ENCODE measurements at regions of chrX and their contacts with region 1.

Region 1: DNA sequence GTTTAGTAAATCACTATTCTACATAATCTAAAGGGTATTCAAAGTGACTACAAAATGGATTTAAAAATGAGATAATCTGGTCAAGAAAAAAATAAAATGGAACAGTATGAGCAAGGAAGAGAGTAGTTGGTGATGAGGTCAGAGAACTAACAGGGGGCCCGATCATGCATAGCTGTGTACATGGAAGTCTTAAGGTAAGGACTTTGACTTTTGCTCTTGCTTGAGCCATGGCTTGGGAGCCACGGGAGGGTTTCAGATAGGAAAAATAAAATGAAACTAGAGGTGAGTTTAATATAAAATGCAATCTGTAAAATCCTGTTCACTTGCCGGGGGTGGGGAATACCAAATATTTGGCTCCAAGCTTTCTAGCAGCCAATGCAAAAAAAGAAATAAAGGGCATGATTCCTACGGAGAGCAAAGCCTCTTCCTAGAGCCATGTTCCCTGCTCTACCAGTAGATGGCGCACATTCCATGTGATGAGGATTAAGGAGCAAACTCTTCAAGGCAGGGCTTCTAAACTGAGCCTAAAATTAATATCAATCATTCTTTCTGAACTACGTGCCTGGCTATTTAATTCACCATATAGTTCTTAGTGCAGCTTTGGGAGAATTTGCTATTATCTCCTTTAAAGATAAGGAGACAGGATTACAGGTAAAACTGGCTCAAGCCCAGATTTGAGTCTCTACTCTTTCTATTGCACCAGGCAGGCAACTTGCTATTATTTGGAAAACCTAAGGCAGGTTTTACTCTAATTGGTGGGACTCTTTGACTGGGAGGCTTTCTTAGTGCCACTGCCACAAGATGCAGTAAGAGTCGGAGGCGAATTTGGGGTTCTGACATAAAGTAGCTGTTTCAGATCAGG is 6.8 kb upstream of the CLCN5 start:
- DNase-seq: no peak
- H3K4me3 ChIP-seq: no peak overlapping the region
- H3K27ac ChIP-seq: no peak overlapping the region
- H3K4me1 ChIP-seq: no peaks in the 10 kb centered on the region
- H3K27me3 ChIP-seq: no peaks in the 10 kb centered on the region
- CTCF ChIP-seq: peak in 2 of 3 experiments; percentile 57 to 67; a peak in 3 of 4 replicates
- EP300 ChIP-seq: no peak
- POLR2A ChIP-seq: no peak
- RAD21 ChIP-seq: peak; percentile 63 to 77

Region 2: DNA sequence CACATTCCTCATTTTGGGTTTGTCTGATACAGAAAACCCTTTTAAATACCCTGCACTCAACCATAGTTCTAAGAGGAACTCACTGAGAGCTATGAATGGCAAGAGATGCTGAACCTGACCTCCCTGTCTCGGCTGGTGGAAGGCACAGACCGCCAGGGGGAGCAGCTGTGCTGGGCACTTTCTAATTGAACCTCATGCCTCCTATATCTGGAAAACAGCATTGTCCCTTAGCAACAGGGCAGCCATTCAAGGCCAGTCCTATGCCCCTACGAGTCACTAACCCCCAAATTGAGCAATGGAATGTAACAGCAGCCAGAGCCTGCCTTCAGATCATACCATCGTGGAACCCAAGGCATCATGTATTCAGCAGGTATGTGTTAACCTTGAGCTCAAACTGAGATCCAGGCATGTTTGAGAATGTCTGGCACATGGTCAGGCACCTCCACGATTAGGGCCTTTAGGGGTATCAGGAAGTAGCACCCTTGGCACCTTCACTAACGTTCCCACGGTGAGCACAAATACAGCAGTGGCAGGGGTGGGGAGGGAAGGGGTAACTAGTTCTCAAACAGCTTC is 31.2 kb before region 1 on chrX:
- CTCF ChIA-PET with region 1: interaction called, 18 read pairs
- POLR2A ChIA-PET with region 1: no interaction called
- DNase-seq: peak; percentile 19 to 70
- H3K4me3 ChIP-seq: no peak overlapping the region
- H3K27ac ChIP-seq: no peak overlapping the region
- H3K4me1 ChIP-seq: peaks cover 0 to 5% (median 3%) of the 10 kb centered on the region in 4 experiments; a peak in 3 of 7 replicates
- H3K27me3 ChIP-seq: no peaks in the 10 kb centered on the region
- CTCF ChIP-seq: peak; percentile 69 to 76 (median 76)
- EP300 ChIP-seq: no peak
- POLR2A ChIP-seq: no peak
- RAD21 ChIP-seq: peak; percentile 52 to 55